Endothelial cell of umbilical vein (primary cell): ENCODE measurements at regions of chr10 and their contacts with region 1.

Region 1: DNA sequence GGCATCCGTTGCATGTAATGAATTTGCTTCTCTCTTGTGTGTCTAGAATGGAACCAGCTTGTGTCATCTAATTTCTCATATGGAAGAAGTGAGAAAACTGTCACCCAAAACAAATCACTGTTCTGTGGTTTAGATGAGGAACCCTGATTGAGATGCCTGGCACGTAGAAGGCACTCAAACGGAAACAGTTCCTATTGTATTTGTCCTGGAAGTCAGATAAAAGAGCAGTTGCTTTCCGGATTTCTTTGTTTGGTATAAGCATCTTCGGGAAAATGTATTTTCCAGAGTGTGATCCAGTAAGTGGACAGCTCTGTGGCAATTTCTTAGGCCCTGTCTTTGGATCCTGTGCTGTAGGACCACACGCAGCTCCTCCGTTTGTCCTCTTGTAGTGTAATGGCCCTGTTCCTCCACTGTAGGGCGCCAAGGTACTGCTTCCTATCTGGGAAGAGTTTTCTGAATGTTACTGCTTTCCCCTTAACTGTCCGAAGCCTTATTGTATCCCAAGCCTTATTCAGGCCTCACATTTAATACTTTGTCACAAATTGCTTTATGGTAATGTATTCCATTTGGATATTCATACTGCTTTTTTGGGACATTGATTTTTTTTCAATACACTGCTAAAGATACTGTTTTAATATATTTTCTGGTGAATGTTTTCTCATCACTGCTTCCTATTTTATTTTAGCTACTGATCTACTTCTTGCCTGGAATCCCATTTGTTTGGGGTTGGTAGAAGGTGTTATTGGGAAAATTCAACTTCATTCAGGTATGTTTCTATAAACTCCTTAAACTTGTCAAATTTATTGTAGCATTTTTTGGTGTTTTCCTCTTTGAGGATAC is 24.8 kb downstream of the INPP5F start:
- DNase-seq: peak; percentile 82
- H3K4me3 ChIP-seq: no peak overlapping the region
- H3K27ac ChIP-seq: no peak overlapping the region
- H3K4me1 ChIP-seq: peaks cover 8% of the 10 kb centered on the region
- H3K27me3 ChIP-seq: no peaks in the 10 kb centered on the region
- CTCF ChIP-seq: peak; percentile 86 to 94
- POLR2A ChIP-seq: no peak

Region 2: GRCh38 chr10:119686439-119687191 is 64.0 kb before region 1 on chr10:
- CTCF ChIA-PET with region 1: interaction called, 75 read pairs
- POLR2A ChIA-PET with region 1: interaction called, 5 read pairs
- dilution Hi-C with region 1: no loop called
- intact Hi-C with region 1: loop called (anchors 1 kb)
- DNase-seq: peak; percentile 94
- H3K4me3 ChIP-seq: peak overlapping the region in 2 of 3 experiments; percentile 20 to 26
- H3K27ac ChIP-seq: peak overlapping the region; percentile 88
- H3K4me1 ChIP-seq: peaks cover 13% of the 10 kb centered on the region
- H3K27me3 ChIP-seq: no peaks in the 10 kb centered on the region
- CTCF ChIP-seq: peak; percentile 89
- POLR2A ChIP-seq: peak; percentile 66

Region 3: DNA sequence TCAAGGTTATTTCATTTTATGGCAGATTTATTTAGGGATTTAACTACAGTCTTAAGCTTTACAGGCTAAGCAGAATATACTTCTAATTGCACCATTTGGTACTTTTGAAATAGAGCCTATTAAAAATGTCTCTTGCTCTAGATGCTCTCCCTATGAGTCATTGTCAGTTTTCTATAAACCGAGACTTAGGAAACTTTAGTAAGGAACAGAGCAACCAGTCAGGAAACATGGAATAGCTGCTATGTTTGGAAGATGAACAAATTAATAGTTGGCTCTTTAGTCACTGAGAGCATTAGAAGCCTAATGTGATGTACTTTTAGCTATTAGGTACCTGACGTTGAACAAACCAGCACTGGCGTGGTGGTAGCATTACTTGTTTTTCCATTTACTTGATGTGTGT is 10.5 kb after region 1 on chr10:
- CTCF ChIA-PET with region 1: interaction called, 31 read pairs
- POLR2A ChIA-PET with region 1: no interaction called
- dilution Hi-C with region 1: no loop called
- intact Hi-C with region 1: loop called (anchors 1 kb)
- DNase-seq: peak; percentile 64
- H3K4me3 ChIP-seq: no peak overlapping the region
- H3K27ac ChIP-seq: no peak overlapping the region
- H3K4me1 ChIP-seq: peaks cover 14% of the 10 kb centered on the region
- H3K27me3 ChIP-seq: no peaks in the 10 kb centered on the region
- CTCF ChIP-seq: no peak
- POLR2A ChIP-seq: no peak

Region 4: GRCh38 chr10:119803264-119803663 is 52.7 kb after region 1 on chr10:
- CTCF ChIA-PET with region 1: interaction called, 20 read pairs
- POLR2A ChIA-PET with region 1: no interaction called
- dilution Hi-C with region 1: no loop called
- intact Hi-C with region 1: no loop called
- DNase-seq: no peak
- H3K4me3 ChIP-seq: no peak overlapping the region
- H3K27ac ChIP-seq: no peak overlapping the region
- H3K4me1 ChIP-seq: peaks cover 12% of the 10 kb centered on the region
- H3K27me3 ChIP-seq: no peaks in the 10 kb centered on the region
- CTCF ChIP-seq: no peak
- POLR2A ChIP-seq: no peak

Region 5: GRCh38 chr10:119834188-119834587 is 83.6 kb after region 1 on chr10:
- CTCF ChIA-PET with region 1: interaction called, 75 read pairs
- POLR2A ChIA-PET with region 1: no interaction called
- dilution Hi-C with region 1: no loop called
- intact Hi-C with region 1: loop called (anchors 1 kb)
- DNase-seq: no peak
- H3K4me3 ChIP-seq: no peak overlapping the region
- H3K27ac ChIP-seq: no peak overlapping the region
- H3K4me1 ChIP-seq: no peaks in the 10 kb centered on the region
- H3K27me3 ChIP-seq: no peaks in the 10 kb centered on the region
- CTCF ChIP-seq: no peak
- POLR2A ChIP-seq: no peak

Region 6: GRCh38 chr10:119872860-119873681 is 122.5 kb after region 1 on chr10:
- CTCF ChIA-PET with region 1: interaction called, 26 read pairs
- POLR2A ChIA-PET with region 1: no interaction called
- dilution Hi-C with region 1: no loop called
- intact Hi-C with region 1: no loop called
- DNase-seq: peak; percentile 92
- H3K4me3 ChIP-seq: peak overlapping the region; percentile 20 to 96 (median 96)
- H3K27ac ChIP-seq: peak overlapping the region; percentile 81
- H3K4me1 ChIP-seq: peaks cover 18% of the 10 kb centered on the region
- H3K27me3 ChIP-seq: no peaks in the 10 kb centered on the region
- CTCF ChIP-seq: no peak
- POLR2A ChIP-seq: peak; percentile 79